Transverse colon (tissue), 4 donors: ENCODE measurements at regions of chr1 and their contacts with region 1.

Region 1: GRCh38 chr1:18429654-18430053 is 51.1 kb upstream of the KLHDC7A start:
- DNase-seq: no peak
- H3K4me3 ChIP-seq: no peak overlapping the region
- H3K27ac ChIP-seq: no peak overlapping the region
- H3K4me1 ChIP-seq: no peaks in the 10 kb centered on the region
- H3K27me3 ChIP-seq: peaks cover 6% of the 10 kb centered on the region
- CTCF ChIP-seq: no peak
- EP300 ChIP-seq: no peak
- POLR2A ChIP-seq: no peak

Region 2: DNA sequence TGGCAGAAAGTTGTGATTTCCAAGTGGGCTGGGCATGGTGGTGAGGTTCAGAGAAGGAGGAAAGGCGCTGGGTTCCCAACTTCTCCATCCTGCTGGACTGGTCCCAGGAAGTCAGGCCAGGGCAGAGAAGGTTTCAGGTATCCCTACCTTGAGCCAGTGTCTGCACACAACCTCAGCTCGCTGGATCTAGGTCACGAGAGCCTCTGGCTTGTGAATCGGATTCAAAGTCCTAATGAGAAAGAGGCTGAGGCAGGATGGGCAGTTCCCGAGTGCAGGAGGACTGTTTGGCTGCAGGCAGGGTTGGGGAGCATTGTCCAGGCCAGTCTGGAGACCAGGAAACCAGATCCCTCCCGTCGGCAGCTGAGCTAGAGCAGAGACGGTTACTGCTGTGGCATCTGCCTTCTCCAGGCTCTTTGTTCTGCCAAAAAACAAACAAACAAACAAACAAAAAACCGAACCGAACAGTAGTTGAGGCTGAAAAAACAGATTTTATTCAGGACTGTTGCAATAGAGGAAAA is 341.5 kb before region 1 on chr1:
- in situ Hi-C with region 1: no loop called
- intact Hi-C with region 1: no loop called
- DNase-seq: no peak
- H3K4me3 ChIP-seq: no peak overlapping the region
- H3K27ac ChIP-seq: no peak overlapping the region
- H3K4me1 ChIP-seq: no peaks in the 10 kb centered on the region
- H3K27me3 ChIP-seq: peaks cover 18% of the 10 kb centered on the region
- CTCF ChIP-seq: no peak
- EP300 ChIP-seq: no peak
- POLR2A ChIP-seq: no peak

Region 3: DNA sequence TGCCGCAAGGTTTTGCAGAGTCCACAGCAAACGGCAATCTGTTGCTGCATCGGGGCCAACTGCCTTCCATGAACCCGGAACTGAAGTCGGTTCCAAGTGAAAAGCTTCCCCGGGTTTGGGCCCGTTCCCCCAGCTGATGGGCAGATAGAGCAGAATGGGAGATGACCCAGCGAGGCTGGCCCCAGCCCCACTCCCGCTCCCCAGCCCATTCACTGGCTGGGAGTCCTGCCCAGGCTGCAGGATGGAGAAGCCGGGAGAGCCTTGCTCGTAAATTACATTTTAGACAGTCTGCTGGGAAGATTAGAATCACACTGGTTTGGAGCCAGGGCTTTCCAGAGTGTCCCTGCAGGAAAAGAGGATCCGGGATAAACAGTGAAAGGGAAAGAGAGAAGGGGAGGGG is 169.4 kb after region 1 on chr1:
- in situ Hi-C with region 1: no loop called
- intact Hi-C with region 1: no loop called
- DNase-seq: no peak
- H3K4me3 ChIP-seq: no peak overlapping the region
- H3K27ac ChIP-seq: no peak overlapping the region
- H3K4me1 ChIP-seq: peaks cover 0 to 6% (median 0%) of the 10 kb centered on the region in 4 donors
- H3K27me3 ChIP-seq: peaks cover 22% of the 10 kb centered on the region
- CTCF ChIP-seq: no peak
- EP300 ChIP-seq: no peak
- POLR2A ChIP-seq: no peak

Region 4: DNA sequence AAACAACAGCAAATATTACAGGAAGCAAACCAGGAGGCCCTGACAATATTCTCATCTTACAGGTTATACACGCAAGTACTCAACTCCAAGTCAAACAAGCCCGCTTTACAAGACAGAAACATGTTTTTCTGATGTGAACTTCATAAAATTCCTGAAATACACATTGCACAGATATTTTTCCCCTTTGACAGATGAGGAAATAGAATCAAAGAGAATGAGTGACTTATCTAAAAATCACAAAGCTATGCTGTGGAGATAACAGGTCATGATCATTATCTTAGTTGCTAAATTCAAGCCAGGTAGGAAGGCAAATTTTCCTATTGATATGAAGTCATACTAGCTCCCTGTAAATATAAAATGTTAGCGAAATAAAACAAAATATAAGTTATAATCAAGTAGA is 762.1 kb after region 1 on chr1:
- in situ Hi-C with region 1: no loop called
- intact Hi-C with region 1: loop called (anchors 5 kb)
- DNase-seq: no peak
- H3K4me3 ChIP-seq: no peak overlapping the region
- H3K27ac ChIP-seq: no peak overlapping the region
- H3K4me1 ChIP-seq: no peaks in the 10 kb centered on the region
- H3K27me3 ChIP-seq: no peaks in the 10 kb centered on the region
- CTCF ChIP-seq: no peak
- EP300 ChIP-seq: no peak
- POLR2A ChIP-seq: no peak